Activated B cell treated with CpG ODN at 0.5 μM for 24 hours (primary cell): ENCODE measurements at regions of chr7 and their contacts with region 1.

Region 1: DNA sequence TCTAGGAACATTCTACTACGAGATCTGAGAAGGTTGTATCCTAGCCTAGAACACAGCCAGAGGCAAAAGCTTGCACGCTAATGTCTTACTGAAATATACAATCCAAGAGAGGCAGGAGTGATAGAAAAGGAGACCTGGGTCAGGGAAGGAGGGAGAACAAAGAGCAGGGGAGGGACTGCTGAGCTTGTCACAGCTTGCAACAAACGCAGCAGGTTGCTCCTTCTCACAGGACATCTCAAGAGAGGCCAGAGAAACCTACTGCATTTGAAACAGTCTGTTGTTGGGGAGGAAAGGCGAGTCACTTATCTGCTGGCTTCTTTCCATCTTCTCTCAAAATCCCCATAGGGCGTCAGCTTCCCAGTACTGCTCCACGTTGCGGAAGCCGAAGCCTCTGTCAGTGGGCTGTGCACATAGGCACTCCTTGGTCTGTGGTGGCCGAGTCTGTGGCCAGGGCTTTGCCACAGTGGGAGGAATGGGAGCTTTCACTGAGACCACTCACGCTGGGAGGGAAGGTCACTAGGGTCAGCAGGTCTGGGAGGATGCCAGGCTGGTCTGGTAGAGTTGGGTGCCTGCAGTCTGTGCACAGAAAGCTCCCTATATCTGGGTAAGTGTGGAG is 25.8 kb upstream of the GPNMB start:
- DNase-seq: no peak
- ATAC-seq: no peak
- H3K4me3 Mint-ChIP-seq: no peak overlapping the region
- H3K27ac Mint-ChIP-seq: no peak overlapping the region
- H3K4me1 Mint-ChIP-seq: peaks cover 2% of the 10 kb centered on the region
- H3K27me3 Mint-ChIP-seq: peaks cover 3% of the 10 kb centered on the region
- CTCF ChIP-seq: no peak

Region 2: DNA sequence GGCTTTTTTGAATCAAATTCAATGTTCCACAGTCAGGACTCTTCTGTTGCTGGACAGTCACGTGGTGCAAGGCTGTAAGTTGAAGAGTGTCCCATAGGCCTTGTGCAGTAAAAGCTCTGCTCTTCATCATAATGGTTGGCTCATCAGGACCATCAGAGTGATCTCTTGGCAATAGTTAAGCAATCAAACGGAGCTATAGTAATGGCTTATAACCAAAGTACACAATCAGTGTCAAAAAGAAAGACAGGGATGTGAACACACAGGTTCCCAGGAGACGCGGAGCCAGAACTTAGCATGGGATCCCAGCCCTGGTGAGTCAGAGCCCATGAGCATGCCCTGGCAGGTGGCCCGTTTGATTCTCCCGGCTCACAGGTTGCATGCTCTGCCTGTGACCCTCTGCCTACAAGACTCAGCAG is 15.0 kb after region 1 on chr7:
- CTCF ChIA-PET with region 1: no interaction called
- POLR2A ChIA-PET with region 1: no interaction called
- intact Hi-C with region 1: loop called (anchors 1 kb)
- DNase-seq: no peak
- ATAC-seq: no peak
- H3K4me3 Mint-ChIP-seq: no peak overlapping the region
- H3K27ac Mint-ChIP-seq: no peak overlapping the region
- H3K4me1 Mint-ChIP-seq: no peaks in the 10 kb centered on the region
- H3K27me3 Mint-ChIP-seq: no peaks in the 10 kb centered on the region
- CTCF ChIP-seq: no peak